Caco-2 (cell line): ENCODE measurements at regions of chr2 and their contacts with region 1.

Region 1: DNA sequence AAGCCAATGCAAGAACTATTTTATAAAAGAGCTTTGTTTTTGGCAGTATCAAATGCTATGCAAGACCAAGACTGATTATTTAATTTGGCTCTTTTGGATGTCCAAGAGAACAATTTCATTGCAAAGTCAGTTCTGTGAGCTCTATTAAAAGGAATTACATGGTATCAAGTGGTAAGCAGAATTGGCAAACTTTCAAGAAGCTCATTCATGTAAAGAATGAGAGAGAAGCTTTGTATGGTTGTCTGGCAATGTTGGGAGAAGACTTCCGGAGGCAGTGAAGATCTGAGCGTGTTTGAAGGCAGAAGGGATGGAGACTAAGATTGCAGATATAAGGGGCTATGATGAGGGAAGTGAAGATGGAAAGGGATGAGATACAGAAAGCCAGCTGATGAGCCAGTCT is 49.6 kb downstream of the CPS1 start:
- DNase-seq: no peak
- H3K4me3 ChIP-seq: no peak overlapping the region
- H3K4me3 Mint-ChIP-seq: no peak overlapping the region
- H3K27ac Mint-ChIP-seq: no peak overlapping the region
- H3K4me1 ChIP-seq: no peaks in the 10 kb centered on the region
- H3K4me1 Mint-ChIP-seq: no peaks in the 10 kb centered on the region
- H3K27me3 ChIP-seq: no peaks in the 10 kb centered on the region
- H3K27me3 Mint-ChIP-seq: no peaks in the 10 kb centered on the region
- CTCF ChIP-seq: no peak

Region 2: DNA sequence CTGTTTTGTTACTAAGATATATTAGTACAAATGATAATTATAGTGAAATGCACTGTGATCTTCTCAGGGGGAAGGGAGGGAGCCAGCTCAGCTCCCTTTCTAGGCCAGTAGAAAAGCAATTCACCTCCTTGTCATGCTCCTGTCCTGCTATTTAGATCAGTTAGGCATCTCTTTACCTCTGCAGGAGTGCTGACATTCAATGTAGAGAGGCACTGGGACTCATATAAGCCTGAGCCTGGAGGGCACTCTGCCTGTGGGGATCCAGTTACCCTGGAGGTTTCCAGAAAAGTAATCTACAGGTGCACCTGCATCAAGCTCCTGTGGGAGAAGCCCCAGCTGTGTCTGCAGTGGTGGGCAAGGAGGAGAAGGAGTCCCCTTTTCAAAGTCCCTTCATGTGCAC is 227.4 kb after region 1 on chr2:
- CTCF ChIA-PET with region 1: no interaction called
- POLR2A ChIA-PET with region 1: no interaction called
- intact Hi-C with region 1: loop called (anchors 10 kb)
- DNase-seq: no peak
- H3K4me3 ChIP-seq: no peak overlapping the region
- H3K4me3 Mint-ChIP-seq: no peak overlapping the region
- H3K27ac Mint-ChIP-seq: no peak overlapping the region
- H3K4me1 ChIP-seq: no peaks in the 10 kb centered on the region
- H3K4me1 Mint-ChIP-seq: no peaks in the 10 kb centered on the region
- H3K27me3 ChIP-seq: no peaks in the 10 kb centered on the region
- H3K27me3 Mint-ChIP-seq: peaks cover 9% of the 10 kb centered on the region
- CTCF ChIP-seq: no peak